ENCODE measurements at regions of chr5 and their contacts with region 1.

Region 1: DNA sequence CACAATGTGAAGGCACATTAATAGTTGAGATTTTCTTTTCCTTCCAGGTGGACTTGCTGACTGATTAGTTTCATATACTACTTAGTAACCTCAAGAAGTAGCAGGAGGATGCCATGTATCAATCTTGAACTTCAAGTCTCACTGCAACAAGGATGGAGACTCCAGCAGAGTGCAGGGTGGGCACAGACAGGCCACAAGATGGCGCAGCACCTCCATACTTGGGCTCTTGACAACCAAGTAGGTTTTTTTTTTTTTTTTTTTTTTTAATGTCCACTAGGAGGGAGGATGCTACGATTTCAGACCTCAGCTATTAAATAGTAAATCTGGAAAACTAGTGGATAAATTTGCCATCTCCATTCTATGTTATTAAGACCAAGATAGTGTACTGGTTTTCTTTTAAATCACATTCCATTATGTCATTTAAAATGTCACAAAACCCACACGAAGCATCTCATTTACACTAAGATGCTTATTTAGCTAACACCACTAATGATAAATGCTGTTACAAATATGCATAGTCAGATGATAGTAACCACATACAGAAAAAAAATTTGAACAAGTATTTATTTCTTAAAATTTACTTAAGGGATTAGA is 58.6 kb downstream of the IL6ST start:
- DNase-seq: peak; percentile 87
- H3K4me3 ChIP-seq: no peak overlapping the region
- H3K4me3 Mint-ChIP-seq: no peak overlapping the region
- H3K27ac Mint-ChIP-seq: peak overlapping the region; percentile 100
- H3K4me1 ChIP-seq: peaks cover 44% of the 10 kb centered on the region
- H3K4me1 Mint-ChIP-seq: peaks cover 48% of the 10 kb centered on the region
- H3K27me3 ChIP-seq: no peaks in the 10 kb centered on the region
- H3K27me3 Mint-ChIP-seq: no peaks in the 10 kb centered on the region
- CTCF ChIP-seq: peak; percentile 85 to 95

Region 2: DNA sequence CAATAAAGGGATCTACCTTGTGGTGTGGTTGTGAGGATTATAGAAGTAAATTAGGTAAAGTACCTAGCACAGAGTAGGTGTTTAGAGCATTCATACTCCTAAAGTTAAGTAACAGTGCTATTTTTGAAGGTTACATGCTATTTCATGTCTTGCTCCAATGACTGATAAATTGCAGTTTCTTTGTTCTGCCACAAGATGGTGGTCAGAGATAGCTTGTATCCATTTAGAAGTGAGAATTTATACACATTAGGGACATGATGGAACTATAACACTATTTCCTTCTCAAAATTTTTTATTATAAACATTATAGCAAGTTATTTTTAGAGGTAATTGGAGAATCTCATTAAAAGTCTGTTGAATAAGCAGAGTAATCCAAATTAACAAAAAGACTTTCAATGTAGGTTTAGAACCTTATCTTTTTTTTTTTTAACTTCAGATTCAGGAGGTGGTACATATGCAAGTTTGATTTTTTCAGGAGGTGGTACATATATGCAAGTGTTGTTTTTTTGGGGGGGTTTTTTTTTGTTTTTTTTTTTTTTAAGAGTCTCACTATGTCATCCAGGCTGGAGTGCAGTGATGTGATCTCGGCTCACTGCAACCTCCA is 611.3 kb before region 1 on chr5:
- CTCF ChIA-PET with region 1: no interaction called
- POLR2A ChIA-PET with region 1: no interaction called
- intact Hi-C with region 1: loop called (anchors 10 kb)
- DNase-seq: peak in 1 of 2 experiments; percentile 32
- H3K4me3 ChIP-seq: no peak overlapping the region
- H3K4me3 Mint-ChIP-seq: no peak overlapping the region
- H3K27ac Mint-ChIP-seq: no peak overlapping the region
- H3K4me1 ChIP-seq: no peaks in the 10 kb centered on the region
- H3K4me1 Mint-ChIP-seq: no peaks in the 10 kb centered on the region
- H3K27me3 ChIP-seq: no peaks in the 10 kb centered on the region
- H3K27me3 Mint-ChIP-seq: no peaks in the 10 kb centered on the region
- CTCF ChIP-seq: peak; percentile 40 to 54

Region 3: DNA sequence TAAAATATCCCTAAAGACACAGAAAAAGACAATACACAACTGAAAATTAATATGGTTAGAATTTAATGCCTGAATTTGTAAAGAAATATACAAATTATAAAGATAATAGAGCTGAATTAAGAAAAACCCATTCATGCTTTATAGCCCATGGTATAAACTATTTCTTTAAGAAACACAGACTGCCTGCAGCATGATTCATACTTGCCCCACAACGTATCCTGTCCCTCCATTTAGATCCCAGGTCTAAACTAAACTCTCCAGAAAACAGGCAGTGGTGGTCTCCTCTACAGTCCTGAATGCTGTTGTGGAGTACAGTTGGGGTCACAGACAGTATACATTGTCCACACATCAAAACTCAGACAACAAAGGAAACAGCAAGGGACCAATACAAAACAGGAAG is 33.8 kb after region 1 on chr5:
- CTCF ChIA-PET with region 1: interaction called, 11 read pairs
- POLR2A ChIA-PET with region 1: no interaction called
- intact Hi-C with region 1: no loop called
- DNase-seq: no peak
- H3K4me3 ChIP-seq: no peak overlapping the region
- H3K4me3 Mint-ChIP-seq: no peak overlapping the region
- H3K27ac Mint-ChIP-seq: no peak overlapping the region
- H3K4me1 ChIP-seq: no peaks in the 10 kb centered on the region
- H3K4me1 Mint-ChIP-seq: peaks cover 7% of the 10 kb centered on the region
- H3K27me3 ChIP-seq: no peaks in the 10 kb centered on the region
- H3K27me3 Mint-ChIP-seq: no peaks in the 10 kb centered on the region
- CTCF ChIP-seq: no peak

Region 4: DNA sequence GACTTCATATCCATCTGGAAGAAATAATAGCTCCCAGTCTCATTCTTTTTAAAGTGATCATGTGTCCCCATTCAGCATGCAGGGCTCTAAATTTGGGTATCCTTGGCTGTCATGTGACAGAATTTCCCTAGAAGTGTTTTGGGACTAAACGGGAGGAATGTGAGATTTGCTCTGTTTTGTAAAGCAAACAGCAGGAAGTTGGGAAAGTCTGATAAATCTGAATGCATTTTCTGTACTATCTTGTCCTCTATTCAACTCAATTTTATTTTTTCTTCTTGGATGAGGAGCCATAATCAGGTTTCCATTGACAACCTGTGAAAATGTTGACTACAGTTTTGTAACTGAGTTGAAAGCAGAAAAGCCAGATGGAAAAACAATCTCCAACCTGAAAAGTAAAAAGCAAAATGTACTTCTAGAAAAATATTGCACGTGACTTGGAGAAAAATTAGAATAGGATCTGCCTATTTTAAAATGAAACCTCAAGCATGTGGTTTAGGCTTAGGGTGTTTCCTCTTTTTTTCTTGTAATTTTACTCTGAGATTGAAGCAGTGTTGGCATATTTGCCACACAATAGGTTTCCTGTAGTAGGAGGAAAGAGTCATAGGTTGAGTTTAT is 134.8 kb after region 1 on chr5:
- CTCF ChIA-PET with region 1: interaction called, 8 read pairs
- POLR2A ChIA-PET with region 1: no interaction called
- intact Hi-C with region 1: loop called (anchors 2 kb)
- DNase-seq: no peak
- H3K4me3 ChIP-seq: no peak overlapping the region
- H3K4me3 Mint-ChIP-seq: no peak overlapping the region
- H3K27ac Mint-ChIP-seq: peak overlapping the region; percentile 30
- H3K4me1 ChIP-seq: peaks cover 56% of the 10 kb centered on the region
- H3K4me1 Mint-ChIP-seq: peaks cover 34% of the 10 kb centered on the region
- H3K27me3 ChIP-seq: no peaks in the 10 kb centered on the region
- H3K27me3 Mint-ChIP-seq: no peaks in the 10 kb centered on the region
- CTCF ChIP-seq: no peak

Region 5: GRCh38 chr5:56200856-56201666 is 264.9 kb after region 1 on chr5:
- CTCF ChIA-PET with region 1: interaction called, 19 read pairs
- POLR2A ChIA-PET with region 1: no interaction called
- intact Hi-C with region 1: loop called (anchors 1 kb)
- DNase-seq: peak; percentile 84 to 85
- H3K4me3 ChIP-seq: no peak overlapping the region
- H3K4me3 Mint-ChIP-seq: no peak overlapping the region
- H3K27ac Mint-ChIP-seq: peak overlapping the region; percentile 42
- H3K4me1 ChIP-seq: peaks cover 21% of the 10 kb centered on the region
- H3K4me1 Mint-ChIP-seq: peaks cover 18% of the 10 kb centered on the region
- H3K27me3 ChIP-seq: no peaks in the 10 kb centered on the region
- H3K27me3 Mint-ChIP-seq: no peaks in the 10 kb centered on the region
- CTCF ChIP-seq: peak; percentile 73 to 93